ENCODE measurements at regions of chr1 and their contacts with region 1.

Region 1: GRCh38 chr1:203299169-203299568 is 6.2 kb upstream of the BTG2 start:
- DNase-seq: peak; percentile 94
- H3K4me3 ChIP-seq: peak overlapping the region; percentile 59
- H3K27ac ChIP-seq: peak overlapping the region; percentile 98
- H3K4me1 ChIP-seq: peaks cover 100% of the 10 kb centered on the region
- CTCF ChIP-seq: peak; percentile 41; the same call in 1 of the 2 replicates

Region 2: DNA sequence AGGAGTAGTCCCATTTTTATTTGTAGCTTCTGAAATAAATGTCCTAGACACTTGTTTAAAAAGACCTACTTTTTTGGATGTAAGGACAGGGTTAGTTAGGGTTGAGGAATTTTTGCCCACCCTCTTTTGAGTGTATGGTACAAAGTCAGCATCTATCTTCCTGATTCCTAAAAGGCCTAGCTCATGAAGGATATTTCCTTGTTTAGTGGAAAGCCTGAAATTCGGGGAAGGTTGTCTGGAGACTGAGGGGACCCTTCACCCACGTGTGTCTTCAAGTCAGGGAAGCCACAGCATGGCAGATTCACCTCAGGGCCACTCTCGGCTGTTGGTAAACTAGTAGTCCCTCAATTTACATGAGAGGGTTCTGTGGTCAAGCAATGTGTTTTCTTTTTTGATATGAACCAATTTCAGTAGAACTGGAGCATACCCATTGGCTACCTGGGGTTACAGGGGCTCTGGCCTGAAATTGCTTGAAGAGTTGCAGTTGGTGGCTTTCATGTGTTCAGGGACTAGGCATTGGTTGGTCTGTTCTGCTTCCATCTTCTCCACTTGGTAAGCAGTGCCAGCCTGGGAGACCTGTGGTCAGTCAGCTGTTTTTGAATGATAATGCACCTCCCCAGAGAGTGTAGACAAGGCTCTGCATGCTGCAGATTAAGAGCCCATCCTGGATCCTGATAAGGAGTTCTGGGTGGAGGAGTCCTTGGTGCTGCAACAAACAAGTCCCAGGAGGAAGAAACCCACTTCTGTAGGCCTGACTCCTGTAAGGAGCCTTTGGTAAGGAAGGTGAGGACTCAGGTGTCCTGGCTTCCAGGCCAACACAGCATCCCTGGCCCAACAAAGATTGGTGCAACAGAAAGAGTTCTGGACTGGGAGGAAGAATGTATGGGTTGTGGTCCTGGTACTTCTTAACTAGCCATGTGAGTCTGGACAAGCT is 12.5 kb after region 1 on chr1:
- CTCF ChIA-PET with region 1: interaction called, 5 read pairs
- POLR2A ChIA-PET with region 1: interaction called, 241 read pairs
- intact Hi-C with region 1: no loop called
- DNase-seq: peak; percentile 43
- H3K4me3 ChIP-seq: no peak overlapping the region
- H3K27ac ChIP-seq: peak overlapping the region; percentile 47
- H3K4me1 ChIP-seq: peaks cover 66% of the 10 kb centered on the region
- CTCF ChIP-seq: no peak

Region 3: GRCh38 chr1:203320591-203321272 is 21.6 kb after region 1 on chr1:
- CTCF ChIA-PET with region 1: interaction called, 13 read pairs
- POLR2A ChIA-PET with region 1: interaction called, 458 read pairs
- intact Hi-C with region 1: no loop called
- DNase-seq: peak; percentile 99
- H3K4me3 ChIP-seq: peak overlapping the region; percentile 54
- H3K27ac ChIP-seq: peak overlapping the region; percentile 98
- H3K4me1 ChIP-seq: peaks cover 95% of the 10 kb centered on the region
- CTCF ChIP-seq: peak; percentile 41; the same call in 1 of the 2 replicates

Region 4: DNA sequence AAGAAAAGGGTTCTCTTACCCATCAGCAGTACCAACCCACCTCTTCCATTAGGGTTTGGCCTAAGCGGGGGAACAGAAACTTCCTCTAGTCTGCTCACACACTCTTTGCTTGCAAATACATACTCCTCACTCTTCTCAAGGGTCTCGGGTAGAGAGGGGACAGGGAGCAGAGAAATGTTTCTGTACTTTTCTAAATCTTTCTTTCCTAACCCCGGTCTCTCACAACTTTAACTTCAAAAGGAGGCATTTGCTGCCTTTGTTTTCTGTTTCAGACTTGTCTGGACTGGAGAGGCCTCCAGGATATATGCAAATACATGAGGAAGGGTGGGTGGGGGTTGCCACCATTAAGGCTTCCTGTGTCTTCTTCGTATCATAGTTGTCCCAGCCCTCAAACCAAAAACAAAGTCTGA is 455.3 kb after region 1 on chr1:
- CTCF ChIA-PET with region 1: no interaction called
- POLR2A ChIA-PET with region 1: no interaction called
- intact Hi-C with region 1: loop called (anchors 5 kb)
- DNase-seq: peak; percentile 88
- H3K4me3 ChIP-seq: peak overlapping the region; percentile 57
- H3K27ac ChIP-seq: peak overlapping the region; percentile 98
- H3K4me1 ChIP-seq: peaks cover 69% of the 10 kb centered on the region
- CTCF ChIP-seq: no peak

Measured in OCI-LY7 (cell line).